PC-3 (cell line): ENCODE measurements at regions of chr1 and their contacts with region 1.

Region 1: GRCh38 chr1:226476648-226477319 is 68.9 kb upstream of the PARP1 start:
- DNase-seq: peak; percentile 96
- ATAC-seq: peak; percentile 75
- H3K4me3 ChIP-seq: peak overlapping the region; percentile 5; the same call in 1 of the 2 replicates
- H3K27ac ChIP-seq: peak overlapping the region; percentile 85
- H3K4me1 ChIP-seq: peaks cover 51% of the 10 kb centered on the region
- H3K27me3 ChIP-seq: no peaks in the 10 kb centered on the region
- CTCF ChIP-seq: peak; percentile 44; the same call in 1 of the 2 replicates

Region 2: DNA sequence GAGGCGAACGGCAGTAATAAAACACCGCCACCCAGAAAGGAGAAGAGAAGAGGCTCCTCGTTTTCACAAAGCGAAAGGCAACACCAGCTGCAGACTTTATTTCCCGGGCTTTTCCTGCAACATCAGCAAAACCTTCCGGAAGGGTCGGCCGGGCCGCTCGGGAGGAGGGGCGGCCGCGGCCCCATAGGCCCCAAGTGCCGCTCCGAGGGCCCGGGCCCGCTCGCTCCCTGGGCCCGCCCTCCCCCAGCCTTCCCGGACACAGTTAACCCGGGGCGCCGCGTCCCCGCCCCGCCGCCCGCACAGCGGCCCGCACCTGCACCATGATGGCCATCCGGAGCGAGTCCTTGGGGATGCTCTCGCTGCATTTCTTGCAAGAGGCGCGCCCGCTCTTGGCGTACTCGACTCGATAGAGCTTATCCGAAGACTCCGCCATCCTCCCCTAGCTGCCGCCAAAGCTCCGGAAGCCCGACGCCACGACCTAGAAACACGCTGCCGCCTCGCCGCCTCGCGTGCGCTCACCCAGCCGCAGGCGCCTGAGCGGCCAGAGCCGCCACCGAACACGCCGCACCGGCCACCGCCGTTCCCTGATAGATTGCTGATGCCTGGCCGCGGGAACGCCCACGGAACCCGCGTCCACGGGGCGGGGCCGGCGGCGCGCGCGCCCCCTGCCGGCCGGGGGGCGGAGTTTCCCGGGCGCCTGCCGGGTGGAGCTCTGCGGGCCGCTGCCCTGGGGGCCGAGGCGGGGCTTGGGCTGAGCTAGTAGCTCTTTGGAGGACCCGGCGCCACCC is 69.1 kb before region 1 on chr1 and contains the start of gene PARP1:
- CTCF ChIA-PET with region 1: interaction called, 3 read pairs
- POLR2A ChIA-PET with region 1: interaction called, 5 read pairs
- intact Hi-C with region 1: loop called (anchors 2 kb)
- DNase-seq: peak; percentile 99
- ATAC-seq: peak; percentile 85
- H3K4me3 ChIP-seq: peak within 1 kb of the TSS; percentile 79
- H3K27ac ChIP-seq: peak within 1 kb of the TSS; percentile 56
- H3K4me1 ChIP-seq: peaks cover 35% of the 10 kb centered on the region
- H3K27me3 ChIP-seq: no peaks in the 10 kb centered on the region
- CTCF ChIP-seq: peak; percentile 82
- total RNA-seq, gene PARP1: 536 and 538 TPM in 2 replicates

Region 3: GRCh38 chr1:226447932-226448677 is 28.7 kb before region 1 on chr1:
- CTCF ChIA-PET with region 1: no interaction called
- POLR2A ChIA-PET with region 1: no interaction called
- intact Hi-C with region 1: loop called (anchors 2 kb)
- DNase-seq: peak; percentile 72
- ATAC-seq: peak; percentile 45
- H3K4me3 ChIP-seq: no peak overlapping the region
- H3K27ac ChIP-seq: no peak overlapping the region
- H3K4me1 ChIP-seq: peaks cover 8% of the 10 kb centered on the region
- H3K27me3 ChIP-seq: no peaks in the 10 kb centered on the region
- CTCF ChIP-seq: no peak